ENCODE measurements at regions of chr5 and their contacts with region 1.

Region 1: DNA sequence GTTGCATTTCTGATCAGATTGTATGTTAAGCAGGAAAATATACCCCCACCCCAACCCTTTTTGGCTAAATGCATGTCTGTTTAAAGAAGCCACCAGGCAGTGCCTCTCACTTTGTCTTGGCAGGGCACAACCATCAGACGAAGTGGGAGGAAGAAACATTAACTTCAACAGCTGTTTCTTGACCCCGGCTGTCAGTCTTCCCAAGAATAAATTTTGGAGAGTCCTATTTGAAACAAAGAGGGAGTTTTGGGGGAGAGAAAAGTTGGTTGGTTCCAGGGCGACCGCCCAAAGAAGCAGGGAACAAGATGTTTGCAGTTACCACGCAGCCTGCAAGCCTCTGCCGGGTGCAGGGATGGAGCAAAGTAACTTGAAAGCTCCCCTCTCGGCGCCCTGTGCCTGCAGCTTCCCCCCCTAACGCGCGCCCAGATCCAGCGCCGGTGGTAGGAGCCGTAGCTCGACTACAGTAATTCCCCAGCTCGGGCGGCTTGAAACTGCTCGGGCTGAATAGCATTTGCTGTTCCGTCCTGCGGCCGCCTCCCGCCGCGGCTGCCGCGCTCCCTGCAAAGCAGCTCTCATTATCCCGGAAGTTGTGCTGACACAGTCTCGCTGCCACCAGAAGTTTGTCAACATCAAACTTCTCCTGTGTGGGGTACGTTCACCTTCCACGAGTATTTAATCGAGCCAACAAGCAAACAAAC is 100.7 kb upstream of the SSBP2 start:
- DNase-seq: peak; percentile 81 to 95 (median 90)
- ATAC-seq: peak; percentile 86
- H3K4me3 ChIP-seq: peak overlapping the region; percentile 65
- H3K4me3 Mint-ChIP-seq: peak overlapping the region; percentile 97
- H3K27ac ChIP-seq: peak overlapping the region; percentile 51 to 66
- H3K27ac Mint-ChIP-seq: peak overlapping the region; percentile 96
- H3K4me1 ChIP-seq: peaks cover 32% of the 10 kb centered on the region
- H3K4me1 Mint-ChIP-seq: peaks cover 56% of the 10 kb centered on the region
- H3K27me3 ChIP-seq: no peaks in the 10 kb centered on the region
- H3K27me3 Mint-ChIP-seq: no peaks in the 10 kb centered on the region
- CTCF ChIP-seq: no peak

Region 2: GRCh38 chr5:80357671-80358070 is 1494.0 kb before region 1 on chr5:
- CTCF ChIA-PET with region 1: no interaction called
- POLR2A ChIA-PET with region 1: no interaction called
- intact Hi-C with region 1: no loop called
- DNase-seq: no peak
- ATAC-seq: no peak
- H3K4me3 ChIP-seq: no peak overlapping the region
- H3K4me3 Mint-ChIP-seq: no peak overlapping the region
- H3K27ac ChIP-seq: no peak overlapping the region
- H3K27ac Mint-ChIP-seq: no peak overlapping the region
- H3K4me1 ChIP-seq: no peaks in the 10 kb centered on the region
- H3K4me1 Mint-ChIP-seq: no peaks in the 10 kb centered on the region
- H3K27me3 ChIP-seq: no peaks in the 10 kb centered on the region
- H3K27me3 Mint-ChIP-seq: no peaks in the 10 kb centered on the region
- CTCF ChIP-seq: no peak

Region 3: DNA sequence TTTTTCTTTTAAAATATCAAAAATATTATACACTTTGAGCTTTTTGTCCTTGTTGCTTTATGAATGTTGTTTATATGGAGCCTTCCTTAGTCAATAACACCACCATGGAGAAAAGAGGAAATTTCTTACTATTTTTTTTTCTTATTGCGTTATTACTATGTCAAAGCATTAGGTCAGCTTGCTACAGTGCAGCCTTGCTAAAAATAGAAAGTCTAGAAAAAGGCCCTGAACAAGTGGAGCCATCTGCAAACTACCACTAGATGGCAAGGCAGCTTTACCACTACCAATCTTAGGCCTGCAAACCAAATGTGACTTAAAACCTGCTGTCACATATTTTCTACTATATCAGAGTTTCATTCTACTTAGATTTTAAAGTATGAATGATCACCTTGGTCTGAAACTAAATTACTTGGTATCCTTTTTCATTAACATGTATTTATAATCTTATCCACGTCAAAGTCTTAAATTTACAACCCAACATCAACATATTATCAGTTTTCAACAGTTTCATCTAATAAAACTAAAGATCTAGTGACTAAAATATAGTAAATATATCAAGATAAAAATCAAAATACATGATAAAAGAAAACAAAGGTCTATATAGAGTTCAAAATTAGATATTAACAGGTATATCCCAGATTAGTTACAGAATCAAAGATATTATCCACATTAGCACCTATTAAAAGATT is 344.6 kb before region 1 on chr5:
- CTCF ChIA-PET with region 1: no interaction called
- POLR2A ChIA-PET with region 1: interaction called, 7 read pairs
- intact Hi-C with region 1: loop called in 1 of 2 experiments (anchors 1 kb)
- DNase-seq: peak in 10 of 14 experiments; percentile 1 to 75 (median 20)
- ATAC-seq: peak; percentile 89
- H3K4me3 ChIP-seq: no peak overlapping the region
- H3K4me3 Mint-ChIP-seq: no peak overlapping the region
- H3K27ac ChIP-seq: no peak overlapping the region
- H3K27ac Mint-ChIP-seq: no peak overlapping the region
- H3K4me1 ChIP-seq: no peaks in the 10 kb centered on the region
- H3K4me1 Mint-ChIP-seq: peaks cover 7% of the 10 kb centered on the region
- H3K27me3 ChIP-seq: no peaks in the 10 kb centered on the region
- H3K27me3 Mint-ChIP-seq: no peaks in the 10 kb centered on the region
- CTCF ChIP-seq: peak; percentile 71

Region 4: GRCh38 chr5:81779125-81779915 is 72.3 kb before region 1 on chr5:
- CTCF ChIA-PET with region 1: interaction called, 5 read pairs
- POLR2A ChIA-PET with region 1: interaction called, 38 read pairs
- intact Hi-C with region 1: no loop called
- DNase-seq: peak; percentile 4 to 67 (median 30)
- ATAC-seq: peak; percentile 68
- H3K4me3 ChIP-seq: peak overlapping the region; percentile 42
- H3K4me3 Mint-ChIP-seq: peak overlapping the region; percentile 90
- H3K27ac ChIP-seq: peak overlapping the region; percentile 65 to 70
- H3K27ac Mint-ChIP-seq: peak overlapping the region; percentile 95
- H3K4me1 ChIP-seq: peaks cover 18% of the 10 kb centered on the region
- H3K4me1 Mint-ChIP-seq: peaks cover 35% of the 10 kb centered on the region
- H3K27me3 ChIP-seq: no peaks in the 10 kb centered on the region
- H3K27me3 Mint-ChIP-seq: no peaks in the 10 kb centered on the region
- CTCF ChIP-seq: no peak

Region 5: DNA sequence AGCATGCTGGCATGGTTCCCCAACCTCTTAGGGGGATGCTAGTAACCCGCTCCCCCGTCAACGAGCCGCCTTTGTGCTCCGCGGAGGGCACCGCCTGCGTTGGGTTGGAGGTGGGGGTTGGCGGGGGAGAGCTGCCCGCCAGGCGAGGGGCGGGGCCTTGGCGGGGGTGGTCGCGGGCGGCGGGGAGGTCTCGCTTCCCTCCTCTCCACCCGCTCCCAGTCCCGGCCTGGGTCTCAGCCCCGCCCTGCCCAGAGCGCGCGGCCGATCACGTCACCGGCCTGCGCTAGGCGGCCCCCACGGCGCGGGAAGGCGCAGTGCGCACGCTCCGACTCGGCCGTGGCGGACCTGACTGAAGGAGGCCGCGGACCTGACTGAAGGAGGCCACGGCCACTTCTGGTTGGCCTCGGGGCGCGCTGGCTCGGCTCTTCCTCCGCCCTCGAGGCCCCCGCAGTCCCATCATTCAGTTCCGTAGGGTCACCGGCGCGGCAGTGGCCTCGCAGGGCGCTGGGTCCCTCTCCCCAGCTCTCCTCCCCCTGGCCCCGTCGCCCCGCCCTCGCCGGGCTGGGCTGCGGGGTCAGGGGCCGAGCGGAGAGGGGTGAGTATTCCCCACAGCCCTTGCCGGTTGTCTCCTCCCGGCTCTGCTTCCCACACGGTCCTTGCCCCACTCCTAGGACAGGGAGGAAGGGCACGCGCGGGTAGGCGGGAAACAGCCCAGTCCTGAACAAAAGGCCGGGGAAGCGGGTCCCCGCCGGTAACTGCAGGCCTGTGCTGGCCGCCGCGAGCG is 120.3 kb after region 1 on chr5 and contains the start of gene ATG10:
- CTCF ChIA-PET with region 1: no interaction called
- POLR2A ChIA-PET with region 1: interaction called, 24 read pairs
- intact Hi-C with region 1: loop called (anchors 2 kb)
- DNase-seq: peak; percentile 60 to 94 (median 82)
- ATAC-seq: peak; percentile 82
- H3K4me3 ChIP-seq: peak within 1 kb of the TSS; percentile 90
- H3K4me3 Mint-ChIP-seq: peak within 1 kb of the TSS; percentile 98
- H3K27ac ChIP-seq: peak within 1 kb of the TSS; percentile 87 to 98
- H3K27ac Mint-ChIP-seq: peak within 1 kb of the TSS; percentile 96
- H3K4me1 ChIP-seq: peaks cover 5% of the 10 kb centered on the region
- H3K4me1 Mint-ChIP-seq: peaks cover 31% of the 10 kb centered on the region
- H3K27me3 ChIP-seq: no peaks in the 10 kb centered on the region
- H3K27me3 Mint-ChIP-seq: no peaks in the 10 kb centered on the region
- CTCF ChIP-seq: no peak
- total RNA-seq, gene ATG10: 4.7 to 5.3 TPM

Region 6: DNA sequence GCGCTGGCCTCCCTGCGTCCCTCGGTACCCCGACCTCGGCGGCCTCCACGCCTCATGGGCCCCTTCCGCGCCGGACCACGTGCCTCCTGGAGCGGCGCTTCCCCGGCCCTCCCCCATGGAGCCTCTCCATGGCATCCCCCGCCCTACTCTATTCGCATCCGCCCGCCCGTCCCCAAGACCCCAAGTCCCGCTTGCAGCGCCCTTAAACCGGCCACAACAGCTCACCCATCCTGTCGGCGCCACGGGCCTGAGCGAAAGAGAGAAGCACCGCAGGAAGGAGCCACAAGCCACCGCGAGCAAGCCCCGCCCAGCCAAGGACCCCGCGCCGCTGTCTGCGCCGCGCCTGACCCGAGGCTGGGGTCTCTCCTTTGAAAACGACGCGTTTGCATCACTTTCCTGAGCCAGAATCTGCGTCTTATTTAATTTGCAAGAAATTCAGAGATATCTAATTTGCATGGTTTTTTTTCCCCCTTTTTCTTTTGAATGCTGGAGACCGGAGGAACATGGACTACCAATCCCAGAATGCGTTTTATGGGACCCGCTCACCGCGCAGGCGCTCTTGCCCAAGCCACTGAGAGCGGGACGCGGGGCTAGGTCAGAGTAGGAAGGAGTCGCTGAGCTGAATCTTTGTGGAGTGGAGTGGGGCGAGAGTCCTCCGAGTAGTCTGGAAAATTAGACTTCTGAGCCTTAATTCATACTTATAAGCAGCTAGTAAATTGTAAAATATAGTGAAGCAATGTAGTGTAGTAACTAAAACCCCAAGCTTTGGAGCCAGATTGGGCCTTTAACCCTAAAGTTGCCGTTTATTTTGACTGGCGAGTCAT is 426.7 kb after region 1 on chr5 and contains the start of gene RPS23:
- CTCF ChIA-PET with region 1: no interaction called
- POLR2A ChIA-PET with region 1: interaction called, 10 read pairs
- intact Hi-C with region 1: loop called in 1 of 2 experiments (anchors 5 kb)
- DNase-seq: peak; percentile 77 to 93 (median 84)
- ATAC-seq: peak; percentile 92
- H3K4me3 ChIP-seq: peak within 1 kb of the TSS; percentile 78
- H3K4me3 Mint-ChIP-seq: peak within 1 kb of the TSS; percentile 94
- H3K27ac ChIP-seq: peak within 1 kb of the TSS; percentile 62 to 63
- H3K27ac Mint-ChIP-seq: peak within 1 kb of the TSS; percentile 94
- H3K4me1 ChIP-seq: peaks cover 18% of the 10 kb centered on the region
- H3K4me1 Mint-ChIP-seq: peaks cover 29% of the 10 kb centered on the region
- H3K27me3 ChIP-seq: no peaks in the 10 kb centered on the region
- H3K27me3 Mint-ChIP-seq: no peaks in the 10 kb centered on the region
- CTCF ChIP-seq: no peak
- total RNA-seq, gene RPS23: 4,190 to 4,212 TPM

Region 7: GRCh38 chr5:82406205-82406773 is 554.7 kb after region 1 on chr5:
- CTCF ChIA-PET with region 1: no interaction called
- POLR2A ChIA-PET with region 1: no interaction called
- intact Hi-C with region 1: no loop called
- DNase-seq: no peak
- ATAC-seq: no peak
- H3K4me3 ChIP-seq: no peak overlapping the region
- H3K4me3 Mint-ChIP-seq: no peak overlapping the region
- H3K27ac ChIP-seq: no peak overlapping the region
- H3K27ac Mint-ChIP-seq: no peak overlapping the region
- H3K4me1 ChIP-seq: no peaks in the 10 kb centered on the region
- H3K4me1 Mint-ChIP-seq: no peaks in the 10 kb centered on the region
- H3K27me3 ChIP-seq: no peaks in the 10 kb centered on the region
- H3K27me3 Mint-ChIP-seq: no peaks in the 10 kb centered on the region
- CTCF ChIP-seq: no peak